ENCODE measurements at regions of chr4 and their contacts with region 1.

Region 1: DNA sequence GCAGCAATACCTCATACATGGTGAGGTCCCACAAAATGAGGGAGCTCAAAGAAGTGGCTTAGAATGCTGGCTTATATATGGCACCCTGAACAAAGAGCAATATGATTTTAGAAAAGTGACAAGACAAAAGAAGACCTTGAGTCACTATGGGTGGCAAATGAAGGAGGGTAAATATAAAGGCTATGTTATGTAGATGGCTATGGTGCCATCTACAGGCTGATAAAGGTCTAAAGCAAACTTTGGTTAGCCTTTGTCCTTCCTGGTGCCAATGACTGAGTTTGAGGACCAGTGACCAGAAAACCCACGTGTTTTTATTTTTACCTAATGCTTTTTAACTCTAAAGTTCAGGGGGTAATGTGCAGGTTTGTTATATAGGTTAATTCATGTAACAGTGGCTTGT is 151.8 kb downstream of the CCNG2 start:
- DNase-seq: no peak
- ATAC-seq: peak; percentile 92
- H3K4me3 Mint-ChIP-seq: no peak overlapping the region
- H3K27ac Mint-ChIP-seq: no peak overlapping the region
- H3K4me1 Mint-ChIP-seq: no peaks in the 10 kb centered on the region
- H3K27me3 Mint-ChIP-seq: peaks cover 8% of the 10 kb centered on the region; the same call in 1 of the 2 replicates
- CTCF ChIP-seq: no peak

Region 2: DNA sequence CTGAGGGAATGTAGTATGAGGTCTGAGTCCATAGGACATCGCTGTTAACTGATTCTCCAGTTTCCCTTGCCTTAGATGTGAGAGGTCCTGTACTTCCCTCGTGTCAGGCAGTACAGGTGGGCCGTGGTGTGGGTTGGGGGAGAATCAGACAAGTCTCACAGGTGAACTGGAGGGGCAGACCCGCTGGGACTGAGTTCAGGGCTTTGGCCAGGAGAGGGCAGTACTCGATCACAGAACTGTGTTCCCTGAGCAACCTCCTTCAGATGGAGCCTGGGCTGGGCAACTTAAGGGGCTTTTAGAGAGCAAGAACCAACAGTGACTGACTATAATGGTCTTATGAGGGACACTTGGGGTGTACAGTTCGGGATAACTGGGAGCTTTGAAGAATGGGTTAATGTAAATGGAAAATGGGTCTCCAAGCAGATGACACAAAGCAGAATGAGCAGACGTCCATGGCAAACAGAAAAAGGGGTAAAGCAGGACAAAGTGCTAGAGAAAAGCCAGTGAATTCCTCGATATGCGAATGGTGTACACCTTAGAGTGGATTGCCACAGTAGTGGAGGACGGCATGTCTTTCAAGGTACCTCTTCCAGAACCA is 68.3 kb before region 1 on chr4:
- CTCF ChIA-PET with region 1: interaction called, 29 read pairs
- POLR2A ChIA-PET with region 1: no interaction called
- DNase-seq: peak; percentile 89
- ATAC-seq: peak; percentile 99
- H3K4me3 Mint-ChIP-seq: no peak overlapping the region
- H3K27ac Mint-ChIP-seq: no peak overlapping the region
- H3K4me1 Mint-ChIP-seq: no peaks in the 10 kb centered on the region; the same call in 1 of the 2 replicates
- H3K27me3 Mint-ChIP-seq: peaks cover 6% of the 10 kb centered on the region
- CTCF ChIP-seq: peak; percentile 80